CD4-positive, alpha-beta T cell (primary cell): ENCODE measurements at regions of chr4 and their contacts with region 1.

Region 1: GRCh38 chr4:47914220-47914925 is at the start of gene NFXL1:
- DNase-seq: peak; percentile 92 to 97 (median 95)
- ATAC-seq: peak; percentile 95
- H3K4me3 ChIP-seq: peak within 1 kb of the TSS; percentile 88
- H3K4me3 Mint-ChIP-seq: peak within 1 kb of the TSS; percentile 96
- H3K27ac ChIP-seq: peak within 1 kb of the TSS; percentile 62 to 67
- H3K27ac Mint-ChIP-seq: peak within 1 kb of the TSS; percentile 95
- H3K4me1 ChIP-seq: peaks cover 14% of the 10 kb centered on the region
- H3K4me1 Mint-ChIP-seq: peaks cover 47% of the 10 kb centered on the region
- H3K27me3 ChIP-seq: no peaks in the 10 kb centered on the region
- H3K27me3 Mint-ChIP-seq: no peaks in the 10 kb centered on the region
- CTCF ChIP-seq: no peak
- total RNA-seq, gene NFXL1: 9.0 to 9.9 TPM

Region 2: DNA sequence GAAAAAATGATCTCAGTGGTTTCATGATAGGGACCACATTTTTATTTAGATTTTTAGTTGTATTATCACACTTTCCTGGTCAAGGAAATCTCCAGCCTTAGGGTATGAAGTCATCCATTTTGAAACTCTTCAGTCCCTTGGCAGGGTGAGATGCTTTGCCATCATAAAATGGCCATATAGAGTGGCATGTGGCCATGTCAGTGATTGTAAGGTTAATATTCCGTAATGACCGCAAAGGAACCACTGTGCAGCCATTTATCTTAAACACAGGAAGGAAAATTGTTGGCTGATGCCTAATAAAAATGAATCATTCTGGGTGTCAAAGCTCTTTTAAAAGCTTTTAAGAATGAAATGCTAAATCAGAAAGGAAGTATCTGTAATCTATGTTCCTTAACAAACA is 486.4 kb before region 1 on chr4:
- CTCF ChIA-PET with region 1: no interaction called
- POLR2A ChIA-PET with region 1: no interaction called
- intact Hi-C with region 1: no loop called
- DNase-seq: no peak
- ATAC-seq: no peak
- H3K4me3 ChIP-seq: no peak overlapping the region
- H3K4me3 Mint-ChIP-seq: no peak overlapping the region
- H3K27ac ChIP-seq: no peak overlapping the region
- H3K27ac Mint-ChIP-seq: no peak overlapping the region
- H3K4me1 ChIP-seq: no peaks in the 10 kb centered on the region
- H3K4me1 Mint-ChIP-seq: no peaks in the 10 kb centered on the region
- H3K27me3 ChIP-seq: no peaks in the 10 kb centered on the region
- H3K27me3 Mint-ChIP-seq: no peaks in the 10 kb centered on the region
- CTCF ChIP-seq: no peak

Region 3: GRCh38 chr4:48016141-48017103 is 102.0 kb after region 1 on chr4 and contains the starts of genes CNGA1 and NIPAL1:
- CTCF ChIA-PET with region 1: no interaction called
- POLR2A ChIA-PET with region 1: no interaction called
- intact Hi-C with region 1: loop called in 1 of 2 experiments (anchors 5 kb)
- DNase-seq: peak; percentile 36 to 83 (median 62)
- ATAC-seq: peak; percentile 96
- H3K4me3 ChIP-seq: peak within 1 kb of the TSS; percentile 65
- H3K4me3 Mint-ChIP-seq: peak within 1 kb of the TSS; percentile 84
- H3K27ac ChIP-seq: no peak within 1 kb of the TSS
- H3K27ac Mint-ChIP-seq: no peak within 1 kb of the TSS
- H3K4me1 ChIP-seq: peaks cover 22% of the 10 kb centered on the region
- H3K4me1 Mint-ChIP-seq: peaks cover 12% of the 10 kb centered on the region
- H3K27me3 ChIP-seq: peaks cover 0 to 9% of the 10 kb centered on the region in 2 experiments
- H3K27me3 Mint-ChIP-seq: peaks cover 22% of the 10 kb centered on the region
- CTCF ChIP-seq: peak; percentile 40
- total RNA-seq, gene CNGA1: not detected
- total RNA-seq, gene NIPAL1: 0.45 to 0.85 TPM

Region 4: GRCh38 chr4:48047421-48047844 is 133.1 kb after region 1 on chr4:
- CTCF ChIA-PET with region 1: no interaction called
- POLR2A ChIA-PET with region 1: no interaction called
- intact Hi-C with region 1: no loop called
- DNase-seq: peak; percentile 5 to 78 (median 36)
- ATAC-seq: peak; percentile 83
- H3K4me3 ChIP-seq: no peak overlapping the region
- H3K4me3 Mint-ChIP-seq: peak overlapping the region; percentile 73
- H3K27ac ChIP-seq: no peak overlapping the region
- H3K27ac Mint-ChIP-seq: no peak overlapping the region
- H3K4me1 ChIP-seq: peaks cover 41% of the 10 kb centered on the region
- H3K4me1 Mint-ChIP-seq: peaks cover 51% of the 10 kb centered on the region
- H3K27me3 ChIP-seq: no peaks in the 10 kb centered on the region
- H3K27me3 Mint-ChIP-seq: no peaks in the 10 kb centered on the region
- CTCF ChIP-seq: no peak

Region 5: GRCh38 chr4:48262926-48263325 is 348.6 kb after region 1 on chr4:
- CTCF ChIA-PET with region 1: no interaction called
- POLR2A ChIA-PET with region 1: no interaction called
- intact Hi-C with region 1: loop called in 1 of 2 experiments (anchors 5 kb)
- DNase-seq: peak in 2 of 14 experiments; percentile 25 to 43
- ATAC-seq: no peak
- H3K4me3 ChIP-seq: no peak overlapping the region
- H3K4me3 Mint-ChIP-seq: no peak overlapping the region
- H3K27ac ChIP-seq: no peak overlapping the region
- H3K27ac Mint-ChIP-seq: no peak overlapping the region
- H3K4me1 ChIP-seq: no peaks in the 10 kb centered on the region
- H3K4me1 Mint-ChIP-seq: peaks cover 7% of the 10 kb centered on the region
- H3K27me3 ChIP-seq: no peaks in the 10 kb centered on the region
- H3K27me3 Mint-ChIP-seq: peaks cover 6% of the 10 kb centered on the region
- CTCF ChIP-seq: no peak

Region 6: DNA sequence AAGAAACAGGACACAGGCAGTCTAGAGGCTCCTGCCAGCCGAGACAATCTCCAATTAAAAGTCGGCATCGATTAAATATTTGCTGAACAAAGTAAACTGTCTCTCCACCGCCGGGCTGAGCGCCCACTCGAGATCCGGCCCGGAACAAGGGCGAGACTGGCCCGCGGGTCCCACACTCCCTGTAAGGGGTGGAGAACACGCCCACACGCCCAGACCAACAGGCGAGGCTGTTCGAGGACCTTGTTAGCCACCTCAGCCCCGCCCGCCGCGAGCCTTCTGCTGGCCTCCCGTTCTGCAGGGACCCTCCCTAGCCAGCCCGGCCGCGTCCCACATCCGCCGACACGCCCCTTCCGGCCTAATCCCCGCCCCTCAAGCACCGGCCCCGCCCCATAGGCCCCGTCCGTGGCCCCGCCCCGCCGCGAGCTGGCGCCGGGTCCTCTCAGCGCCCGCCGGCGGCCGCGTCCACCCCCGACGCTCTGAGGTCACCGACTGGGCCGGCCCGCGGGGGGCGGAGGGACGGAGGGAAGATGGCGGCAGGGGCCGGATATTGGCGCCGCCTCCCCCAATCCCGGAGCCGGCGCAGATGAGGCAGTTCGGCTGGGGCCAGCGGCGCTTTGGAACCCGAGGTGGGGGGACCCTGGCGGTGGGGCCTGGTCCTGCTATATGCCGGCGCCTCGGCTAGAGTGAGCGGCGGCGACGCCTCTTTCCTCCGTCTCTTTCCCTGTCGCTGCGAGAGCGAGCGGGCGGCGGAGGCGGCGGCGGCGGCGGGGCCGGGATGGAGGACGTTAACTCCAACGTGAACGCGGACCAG is 426.8 kb after region 1 on chr4 and contains the start of gene SLAIN2:
- CTCF ChIA-PET with region 1: no interaction called
- POLR2A ChIA-PET with region 1: interaction called, 4 read pairs
- intact Hi-C with region 1: loop called (anchors 1 to 2 kb)
- DNase-seq: peak; percentile 92 to 100 (median 98)
- ATAC-seq: peak; percentile 81
- H3K4me3 ChIP-seq: peak within 1 kb of the TSS; percentile 82
- H3K4me3 Mint-ChIP-seq: peak within 1 kb of the TSS; percentile 100
- H3K27ac ChIP-seq: peak within 1 kb of the TSS; percentile 91 to 95
- H3K27ac Mint-ChIP-seq: peak within 1 kb of the TSS; percentile 98
- H3K4me1 ChIP-seq: peaks cover 18% of the 10 kb centered on the region
- H3K4me1 Mint-ChIP-seq: peaks cover 54% of the 10 kb centered on the region
- H3K27me3 ChIP-seq: no peaks in the 10 kb centered on the region
- H3K27me3 Mint-ChIP-seq: no peaks in the 10 kb centered on the region
- CTCF ChIP-seq: peak; percentile 36
- total RNA-seq, gene SLAIN2: 46.3 to 47.0 TPM